Activated CD4-positive, alpha-beta T cell treated with anti-CD3 and anti-CD28 coated beads for 36 hours (primary cell): ENCODE measurements at regions of chr20 and their contacts with region 1.

Region 1: DNA sequence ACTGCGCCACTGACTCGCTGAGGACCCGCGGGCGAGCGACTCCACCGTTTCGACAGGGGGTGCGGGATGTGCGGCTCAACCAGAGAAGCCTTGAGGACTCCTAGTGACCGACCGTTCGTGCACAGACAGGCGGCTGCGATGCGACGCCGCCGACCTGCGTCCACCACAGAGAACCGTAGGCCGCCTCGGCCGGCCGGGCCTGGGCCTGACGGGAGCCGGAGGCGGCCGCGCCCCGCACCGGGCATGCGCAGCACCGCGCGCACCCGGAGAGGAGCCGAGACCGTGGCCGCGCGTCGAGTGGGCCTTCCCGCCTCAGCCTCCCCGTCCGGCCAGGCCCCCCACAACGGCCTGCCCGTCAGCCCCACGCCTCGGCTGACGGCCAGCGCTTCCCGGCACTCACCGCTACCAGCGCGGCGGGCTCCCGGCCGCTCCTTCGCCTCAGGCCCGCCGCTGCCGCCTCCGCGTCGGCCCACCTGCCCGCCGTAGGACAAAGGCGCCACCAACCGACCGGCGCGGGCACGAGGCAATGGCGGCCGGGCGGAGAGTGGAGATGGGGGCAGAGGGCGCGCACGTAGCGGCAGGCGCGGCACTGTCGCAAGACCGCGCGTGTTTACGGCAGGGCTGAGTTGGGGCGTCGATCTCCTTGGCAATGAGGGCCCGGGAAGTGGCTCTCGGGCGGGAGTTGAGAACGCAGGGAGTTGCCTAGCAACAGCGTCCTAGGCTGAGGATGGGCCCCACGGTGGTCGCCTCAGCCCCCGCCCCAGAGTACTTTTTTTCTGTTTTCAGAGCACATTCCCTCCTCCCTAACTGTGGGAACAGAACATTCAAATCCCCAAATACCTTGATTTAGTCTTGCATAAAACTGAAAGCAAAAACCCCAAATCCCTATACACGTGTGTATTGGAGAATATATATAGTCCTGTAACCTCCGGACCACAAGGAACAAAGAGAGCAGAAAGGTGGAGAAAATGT is at the start of gene NCOA5:
- DNase-seq: peak; percentile 97
- ATAC-seq: peak; percentile 87
- H3K4me3 Mint-ChIP-seq: peak within 1 kb of the TSS; percentile 86
- H3K27ac Mint-ChIP-seq: peak within 1 kb of the TSS; percentile 88
- H3K4me1 Mint-ChIP-seq: peaks cover 46% of the 10 kb centered on the region
- H3K27me3 Mint-ChIP-seq: no peaks in the 10 kb centered on the region
- total RNA-seq, gene NCOA5: 17.9 to 18.8 TPM

Region 2: GRCh38 chr20:45857114-45857881 is 232.4 kb before region 1 on chr20 and contains the starts of genes ACOT8 and ZSWIM3:
- CTCF ChIA-PET with region 1: no interaction called
- POLR2A ChIA-PET with region 1: no interaction called
- intact Hi-C with region 1: loop called in 1 of 2 experiments (anchors 1 kb)
- DNase-seq: peak; percentile 95
- ATAC-seq: peak; percentile 97
- H3K4me3 Mint-ChIP-seq: peak within 1 kb of the TSS; percentile 93
- H3K27ac Mint-ChIP-seq: peak within 1 kb of the TSS; percentile 99
- H3K4me1 Mint-ChIP-seq: peaks cover 38% of the 10 kb centered on the region
- H3K27me3 Mint-ChIP-seq: no peaks in the 10 kb centered on the region
- total RNA-seq, gene ACOT8: 21.9 to 22.6 TPM
- total RNA-seq, gene ZSWIM3: 4.2 to 4.8 TPM

Region 3: DNA sequence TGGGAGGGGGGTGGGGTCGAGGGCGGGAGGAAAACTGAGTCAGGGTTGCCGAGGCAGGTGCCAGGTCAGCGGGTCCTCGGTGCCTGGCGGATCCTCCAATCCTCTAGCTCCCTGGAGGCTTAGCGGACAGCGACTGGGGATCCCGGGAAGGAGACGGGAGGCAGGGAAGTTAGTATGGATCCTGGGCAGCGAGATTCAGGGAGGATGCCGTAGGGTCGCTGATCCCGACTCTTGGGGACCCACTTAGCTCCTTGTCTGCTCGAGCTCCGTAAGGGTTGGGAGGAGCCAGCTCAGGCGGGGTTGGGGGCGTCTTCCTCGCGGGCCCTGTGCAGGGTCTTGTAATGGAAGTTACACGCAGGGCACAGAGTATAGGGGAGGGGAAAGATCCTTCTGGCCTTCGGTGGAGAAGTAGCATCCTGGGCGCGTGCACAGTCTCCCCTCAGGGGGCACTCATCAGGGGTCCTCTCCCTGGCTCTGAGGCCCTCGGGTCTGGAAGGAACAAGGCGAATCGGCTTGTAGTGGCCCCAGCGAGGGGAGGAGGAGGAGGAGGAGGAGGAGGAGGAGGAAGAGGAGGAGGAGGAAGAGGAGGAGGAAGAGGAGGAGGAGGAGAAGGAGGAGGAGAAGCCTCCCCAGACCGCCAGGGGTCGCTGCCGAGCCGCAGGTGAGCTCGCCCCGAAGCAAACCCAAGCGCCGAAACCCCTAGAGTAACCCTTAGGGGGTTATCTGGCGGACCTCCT is 67.1 kb before region 1 on chr20:
- CTCF ChIA-PET with region 1: interaction called, 4 read pairs
- POLR2A ChIA-PET with region 1: no interaction called
- intact Hi-C with region 1: loop called (anchors 1 kb)
- DNase-seq: peak; percentile 88
- ATAC-seq: peak; percentile 60
- H3K4me3 Mint-ChIP-seq: peak overlapping the region; percentile 57
- H3K27ac Mint-ChIP-seq: no peak overlapping the region
- H3K4me1 Mint-ChIP-seq: peaks cover 17% of the 10 kb centered on the region
- H3K27me3 Mint-ChIP-seq: peaks cover 29% of the 10 kb centered on the region

Region 4: DNA sequence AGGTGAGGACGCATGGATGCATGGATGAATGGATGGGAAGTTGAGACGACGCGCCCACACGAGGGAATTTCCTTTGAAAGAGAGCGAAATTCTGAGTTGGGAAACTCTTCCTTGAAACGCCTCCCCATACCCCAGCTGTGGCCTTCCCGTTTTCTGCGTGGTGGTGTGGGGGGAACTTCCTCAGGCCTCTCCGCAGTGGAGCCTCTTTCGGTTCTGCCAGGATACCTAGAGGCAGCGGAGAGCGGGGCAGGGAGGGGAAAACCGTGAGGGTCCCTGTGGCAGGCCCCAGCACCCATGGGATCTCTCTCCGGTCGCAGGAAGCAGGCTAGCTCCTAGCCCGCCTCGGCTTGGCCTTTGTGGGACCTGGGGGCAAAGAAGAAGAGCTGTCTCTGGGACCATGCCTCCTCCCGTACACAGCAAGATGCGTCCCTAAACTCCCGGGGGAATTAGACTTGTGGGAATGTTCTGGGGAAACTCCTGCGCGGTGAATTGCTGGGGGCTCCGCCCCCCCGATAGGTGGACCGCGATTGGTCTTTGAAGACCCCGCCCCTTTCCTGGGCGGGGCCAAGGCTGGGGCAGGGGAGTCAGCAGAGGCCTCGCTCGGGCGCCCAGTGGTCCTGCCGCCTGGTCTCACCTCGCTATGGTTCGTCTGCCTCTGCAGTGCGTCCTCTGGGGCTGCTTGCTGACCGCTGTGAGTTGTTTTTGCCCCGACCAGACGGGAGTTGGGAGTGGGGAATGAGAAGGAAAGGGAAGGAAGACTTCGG is 28.2 kb after region 1 on chr20 and contains the start of gene CD40:
- CTCF ChIA-PET with region 1: interaction called, 3 read pairs
- POLR2A ChIA-PET with region 1: no interaction called
- intact Hi-C with region 1: loop called in 1 of 2 experiments (anchors 1 kb)
- DNase-seq: peak; percentile 81
- ATAC-seq: peak; percentile 98
- H3K4me3 Mint-ChIP-seq: peak within 1 kb of the TSS; percentile 90
- H3K27ac Mint-ChIP-seq: peak within 1 kb of the TSS; percentile 78
- H3K4me1 Mint-ChIP-seq: peaks cover 11% of the 10 kb centered on the region
- H3K27me3 Mint-ChIP-seq: peaks cover 17% of the 10 kb centered on the region
- total RNA-seq, gene CD40: 4.0 to 5.1 TPM

Region 5: GRCh38 chr20:46293084-46293483 is 203.4 kb after region 1 on chr20:
- CTCF ChIA-PET with region 1: no interaction called
- POLR2A ChIA-PET with region 1: no interaction called
- intact Hi-C with region 1: no loop called
- DNase-seq: no peak
- ATAC-seq: no peak
- H3K4me3 Mint-ChIP-seq: no peak overlapping the region
- H3K27ac Mint-ChIP-seq: no peak overlapping the region
- H3K4me1 Mint-ChIP-seq: no peaks in the 10 kb centered on the region
- H3K27me3 Mint-ChIP-seq: peaks cover 23% of the 10 kb centered on the region